Gastrocnemius medialis (tissue), 4 donors: ENCODE measurements at regions of chr17 and their contacts with region 1.

Region 1: DNA sequence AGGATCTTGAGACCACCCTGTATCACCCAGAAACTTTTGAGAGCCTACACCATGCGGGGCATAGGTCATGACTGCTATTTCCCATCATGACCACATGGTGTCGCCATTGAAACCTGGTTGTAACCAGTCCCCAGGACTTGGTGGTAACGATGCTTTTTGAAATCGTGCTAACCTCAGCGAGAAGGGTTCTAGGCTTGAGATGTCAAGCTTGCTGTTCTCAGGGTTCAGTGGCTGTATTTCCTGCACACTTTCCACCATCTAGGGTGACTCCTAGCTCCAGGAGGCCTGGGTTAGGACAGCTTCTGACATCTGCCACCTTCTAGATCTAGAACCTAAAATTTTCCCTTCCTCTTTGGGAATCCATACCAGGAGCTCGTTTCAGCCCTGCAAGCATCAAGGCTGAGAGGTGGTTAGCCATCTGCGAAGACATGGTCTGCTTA is 13.0 kb upstream of the SPNS3 start:
- DNase-seq: peak; percentile 36 to 48
- ATAC-seq: peak; percentile 87 to 97
- H3K4me3 ChIP-seq: no peak overlapping the region
- H3K27ac ChIP-seq: no peak overlapping the region
- H3K4me1 ChIP-seq: no peaks in the 10 kb centered on the region
- H3K27me3 ChIP-seq: no peaks in the 10 kb centered on the region
- CTCF ChIP-seq: peak; percentile 65 to 86 (median 79)
- POLR2A ChIP-seq: no peak

Region 2: GRCh38 chr17:4199818-4200402 is 220.8 kb before region 1 on chr17:
- in situ Hi-C with region 1: loop called (anchors 5 to 10 kb)
- intact Hi-C with region 1: no loop called
- DNase-seq: no peak
- ATAC-seq: no peak
- H3K4me3 ChIP-seq: no peak overlapping the region
- H3K27ac ChIP-seq: no peak overlapping the region
- H3K4me1 ChIP-seq: peaks cover 16 to 19% of the 10 kb centered on the region in 2 donors
- H3K27me3 ChIP-seq: no peaks in the 10 kb centered on the region
- CTCF ChIP-seq: peak; percentile 39 to 79 (median 69)
- POLR2A ChIP-seq: no peak

Region 3: GRCh38 chr17:4498461-4499397 is 78.0 kb after region 1 on chr17 and contains the start of gene SPNS2:
- in situ Hi-C with region 1: no loop called
- intact Hi-C with region 1: loop called (anchors 10 kb)
- DNase-seq: peak; percentile 14 to 39
- ATAC-seq: peak; percentile 87 to 88
- H3K4me3 ChIP-seq: peak within 1 kb of the TSS; percentile 49 to 63 (median 54)
- H3K27ac ChIP-seq: peak within 1 kb of the TSS; percentile 51 to 66 (median 60)
- H3K4me1 ChIP-seq: peaks cover 10 to 15% of the 10 kb centered on the region in 2 donors
- H3K27me3 ChIP-seq: peaks cover 23 to 27% (median 25%) of the 10 kb centered on the region in 3 donors
- CTCF ChIP-seq: no peak
- POLR2A ChIP-seq: peak; percentile 25 to 48
- total RNA-seq, gene SPNS2: 2.7 to 6.2 (median 4.2) TPM

Region 4: GRCh38 chr17:4543557-4544026 is 122.9 kb after region 1 on chr17:
- in situ Hi-C with region 1: no loop called
- intact Hi-C with region 1: no loop called
- DNase-seq: no peak
- ATAC-seq: no peak
- H3K4me3 ChIP-seq: no peak overlapping the region
- H3K27ac ChIP-seq: peak overlapping the region in 1 of 4 donors; percentile 76
- H3K4me1 ChIP-seq: peaks cover 19 to 28% of the 10 kb centered on the region in 2 donors
- H3K27me3 ChIP-seq: no peaks in the 10 kb centered on the region
- CTCF ChIP-seq: no peak
- POLR2A ChIP-seq: no peak

Region 5: DNA sequence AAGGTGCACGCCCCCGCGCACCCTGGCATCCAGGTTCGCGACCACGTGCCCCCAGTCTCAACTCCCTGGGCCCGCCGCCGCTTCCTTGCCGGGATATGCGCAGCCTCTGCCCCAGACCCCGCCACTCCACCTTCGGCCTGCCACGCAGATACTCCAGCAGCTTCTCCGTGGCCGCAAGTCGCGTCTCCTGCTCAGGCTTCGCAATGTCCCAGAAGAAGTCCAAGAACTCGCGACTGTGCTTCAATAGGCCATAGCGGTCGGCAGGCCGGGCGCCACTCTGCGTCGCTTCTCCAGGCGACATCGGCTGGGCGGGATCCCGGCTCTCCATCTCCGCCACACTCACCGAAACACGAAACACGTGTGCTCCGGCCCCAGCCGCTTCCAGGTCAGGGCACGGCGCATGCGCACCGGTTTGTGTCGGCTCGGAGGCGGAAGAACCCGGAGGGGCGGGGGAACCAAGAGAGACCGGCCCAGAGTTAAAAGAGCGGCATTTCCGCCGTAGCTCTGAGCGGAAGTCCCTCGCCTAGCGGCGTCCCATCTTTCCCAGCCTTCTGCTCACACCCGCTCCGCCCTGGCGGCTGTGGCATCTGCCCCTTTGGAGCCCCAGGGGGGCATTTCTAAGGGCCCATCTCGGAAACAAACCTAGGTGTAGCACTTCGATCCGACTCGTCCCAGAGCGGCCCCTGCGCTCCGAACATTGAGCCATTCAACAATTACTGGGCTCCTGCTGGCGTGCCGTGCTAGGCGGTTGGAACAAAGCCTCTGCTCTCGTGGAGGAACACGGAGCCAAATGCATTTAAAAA is 134.5 kb after region 1 on chr17 and contains the start of gene MYBBP1A:
- in situ Hi-C with region 1: loop called in 1 of 4 experiments (anchors 10 kb)
- intact Hi-C with region 1: loop called (anchors 10 kb)
- DNase-seq: peak; percentile 95 to 96
- ATAC-seq: peak; percentile 96 to 98
- H3K4me3 ChIP-seq: peak within 1 kb of the TSS; percentile 90 to 99 (median 97)
- H3K27ac ChIP-seq: peak within 1 kb of the TSS; percentile 76 to 95 (median 87)
- H3K4me1 ChIP-seq: peaks cover 17 to 19% of the 10 kb centered on the region in 2 donors
- H3K27me3 ChIP-seq: no peaks in the 10 kb centered on the region
- CTCF ChIP-seq: peak in 3 of 5 experiments; percentile 25 to 32 (median 31)
- POLR2A ChIP-seq: peak; percentile 55 to 61
- total RNA-seq, gene MYBBP1A: 42.5 to 60.2 (median 48.9) TPM

Region 6: DNA sequence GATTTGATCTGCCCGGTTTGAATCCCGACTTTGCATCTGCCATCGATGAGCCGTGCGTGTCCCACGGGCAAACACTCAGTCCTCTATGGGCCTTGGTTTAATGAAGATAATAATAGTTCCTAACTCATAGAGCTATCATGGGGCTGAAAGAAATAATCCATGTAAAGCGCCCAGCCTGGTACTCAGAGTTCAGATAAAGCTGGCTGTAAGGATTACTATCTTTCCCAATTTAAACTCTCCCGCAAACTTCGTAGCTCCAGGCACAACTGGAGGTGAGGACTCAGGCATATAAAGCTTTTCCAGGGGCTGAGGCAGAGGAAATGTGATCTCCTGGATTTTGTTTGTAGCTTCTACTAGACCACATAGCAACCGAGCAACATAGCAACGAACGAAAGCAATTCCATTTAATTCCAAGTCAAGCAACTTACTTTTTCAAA is 204.5 kb after region 1 on chr17:
- in situ Hi-C with region 1: loop called in 2 of 4 experiments (anchors 25 kb)
- intact Hi-C with region 1: loop called (anchors 2 kb)
- DNase-seq: peak; percentile 29 to 54
- ATAC-seq: peak; percentile 78 to 92
- H3K4me3 ChIP-seq: peak overlapping the region in 2 of 4 donors; percentile 15 to 32
- H3K27ac ChIP-seq: peak overlapping the region; percentile 85 to 88 (median 85)
- H3K4me1 ChIP-seq: peaks cover 14 to 24% of the 10 kb centered on the region in 2 donors
- H3K27me3 ChIP-seq: no peaks in the 10 kb centered on the region
- CTCF ChIP-seq: no peak
- POLR2A ChIP-seq: peak in 1 of 2 donors; percentile 59